PC-9 (cell line): ENCODE measurements at regions of chr2 and their contacts with region 1.

Region 1: DNA sequence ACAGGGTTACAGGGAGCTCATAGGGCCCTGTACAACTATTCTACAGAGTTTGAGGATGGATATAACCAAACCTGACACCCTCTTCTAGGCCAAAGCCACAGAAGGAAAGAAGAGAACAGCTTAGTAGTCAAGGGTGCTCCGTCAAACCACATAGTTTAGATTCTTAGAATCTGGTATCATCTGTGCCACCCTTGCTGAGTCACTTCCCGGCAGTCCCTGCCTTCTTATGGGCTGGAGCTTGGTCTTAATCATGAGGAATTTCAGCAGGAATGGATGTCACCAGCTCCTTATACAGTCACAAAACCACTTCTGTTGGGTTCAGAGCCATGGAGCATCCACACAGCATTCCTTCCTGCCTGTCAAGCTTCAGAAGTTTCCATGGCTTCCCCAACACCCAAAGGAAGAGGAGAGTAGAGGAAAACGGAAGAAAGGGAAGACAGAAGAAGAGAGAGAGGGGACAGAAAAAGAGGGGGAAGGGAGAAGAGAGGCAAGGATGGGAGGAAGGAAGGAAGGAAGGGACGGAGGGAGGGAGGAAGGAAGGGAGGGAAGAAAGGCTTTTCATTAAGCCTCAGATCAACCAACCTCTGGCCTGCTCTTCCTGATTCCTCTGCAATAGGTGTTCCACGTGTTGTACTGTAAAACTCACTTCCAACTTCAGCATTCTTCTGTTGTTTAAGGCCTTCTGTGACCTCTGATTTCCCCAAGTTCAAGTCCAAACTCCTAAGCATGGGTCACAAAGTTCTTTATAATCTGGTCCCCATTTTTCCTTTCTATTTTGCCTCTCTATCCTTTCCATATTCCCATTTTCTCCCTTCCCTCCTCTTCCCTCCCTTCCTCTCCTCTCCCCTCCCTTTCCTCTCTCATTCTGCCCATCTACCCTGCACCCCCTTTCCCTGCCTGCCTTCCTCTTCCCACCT is 246.1 kb upstream of the TNP1 start:
- DNase-seq: peak; percentile 79 to 95
- H3K4me3 ChIP-seq: no peak overlapping the region
- H3K27ac ChIP-seq: peak overlapping the region; percentile 94
- H3K4me1 ChIP-seq: peaks cover 61% of the 10 kb centered on the region
- H3K27me3 ChIP-seq: no peaks in the 10 kb centered on the region
- CTCF ChIP-seq: no peak

Region 2: DNA sequence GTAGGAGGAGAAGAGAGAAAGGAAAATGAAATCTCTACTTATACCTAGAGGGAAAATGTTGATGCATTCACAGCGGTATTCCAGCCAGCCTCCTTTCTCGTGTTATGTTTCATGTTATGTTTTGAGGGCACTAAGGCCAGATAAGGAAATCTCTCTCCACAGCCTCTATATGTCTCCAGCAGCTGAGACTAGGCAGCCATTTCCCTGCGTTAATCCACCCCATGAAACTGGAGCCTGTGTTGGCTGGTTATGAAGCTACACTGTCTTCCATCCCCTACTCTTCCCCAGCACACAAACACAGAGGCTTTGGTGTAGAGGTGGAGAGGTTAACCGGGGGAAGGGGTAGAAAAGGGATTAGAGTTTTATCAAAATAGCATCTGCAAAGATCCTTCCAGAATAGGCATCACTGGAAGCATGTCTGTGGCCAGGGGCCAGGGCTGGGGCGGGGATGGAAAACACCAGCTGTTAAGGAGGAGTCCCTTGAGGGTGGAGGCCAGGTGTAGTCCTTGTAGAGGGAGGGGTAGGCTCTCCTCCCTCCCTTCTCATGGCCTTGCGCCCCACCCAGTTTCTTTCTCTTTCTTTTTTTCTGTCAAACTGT is 145.2 kb before region 1 on chr2:
- CTCF ChIA-PET with region 1: interaction called, 10 read pairs
- POLR2A ChIA-PET with region 1: no interaction called
- intact Hi-C with region 1: no loop called
- DNase-seq: no peak
- H3K4me3 ChIP-seq: no peak overlapping the region
- H3K27ac ChIP-seq: no peak overlapping the region
- H3K4me1 ChIP-seq: no peaks in the 10 kb centered on the region
- H3K27me3 ChIP-seq: no peaks in the 10 kb centered on the region
- CTCF ChIP-seq: no peak

Region 3: DNA sequence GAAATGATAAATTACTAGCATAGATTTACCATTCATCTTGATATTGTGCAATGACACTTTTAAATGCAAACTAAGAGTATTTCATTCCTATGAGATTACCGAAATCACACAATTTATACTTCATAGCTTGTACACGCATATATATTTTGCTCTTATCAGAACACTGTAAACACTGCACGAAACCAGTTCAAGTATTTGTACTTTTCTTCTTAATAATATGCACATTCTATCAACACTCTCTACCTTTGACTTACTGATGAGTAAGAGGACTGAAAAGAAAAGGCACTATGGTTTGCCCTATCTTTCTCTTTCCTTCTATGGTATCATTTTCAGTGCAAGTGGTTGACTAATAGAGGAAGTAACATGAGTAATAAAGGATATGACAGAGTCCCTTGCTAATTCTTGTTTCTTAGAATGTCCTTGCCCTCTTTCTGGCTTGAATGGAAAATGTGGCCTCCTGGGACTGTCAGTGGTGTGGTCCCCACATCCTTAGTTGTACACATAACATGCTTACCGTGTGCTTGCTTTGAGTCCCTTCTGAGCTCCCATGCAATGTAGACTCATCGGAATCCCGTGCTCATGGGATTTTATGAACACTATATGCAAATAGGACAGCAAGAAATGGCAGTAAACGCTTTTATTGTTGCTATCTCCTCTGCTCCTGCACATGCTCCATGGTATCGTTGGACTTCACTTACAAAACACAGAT is 117.4 kb after region 1 on chr2:
- CTCF ChIA-PET with region 1: no interaction called
- POLR2A ChIA-PET with region 1: no interaction called
- intact Hi-C with region 1: loop called (anchors 2 kb)
- DNase-seq: peak in 1 of 2 experiments; percentile 93
- H3K4me3 ChIP-seq: peak overlapping the region; percentile 17
- H3K27ac ChIP-seq: peak overlapping the region; percentile 95
- H3K4me1 ChIP-seq: peaks cover 29% of the 10 kb centered on the region
- H3K27me3 ChIP-seq: no peaks in the 10 kb centered on the region
- CTCF ChIP-seq: no peak

Region 4: GRCh38 chr2:217331523-217332139 is 225.6 kb after region 1 on chr2:
- CTCF ChIA-PET with region 1: no interaction called
- POLR2A ChIA-PET with region 1: interaction called, 6 read pairs
- intact Hi-C with region 1: loop called (anchors 5 kb)
- DNase-seq: peak; percentile 88 to 99
- H3K4me3 ChIP-seq: no peak overlapping the region
- H3K27ac ChIP-seq: peak overlapping the region; percentile 79
- H3K4me1 ChIP-seq: peaks cover 90% of the 10 kb centered on the region
- H3K27me3 ChIP-seq: no peaks in the 10 kb centered on the region
- CTCF ChIP-seq: no peak

Region 5: GRCh38 chr2:217530392-217531090 is 424.6 kb after region 1 on chr2:
- CTCF ChIA-PET with region 1: no interaction called
- POLR2A ChIA-PET with region 1: interaction called, 17 read pairs
- intact Hi-C with region 1: no loop called
- DNase-seq: no peak
- H3K4me3 ChIP-seq: no peak overlapping the region
- H3K27ac ChIP-seq: no peak overlapping the region
- H3K4me1 ChIP-seq: no peaks in the 10 kb centered on the region
- H3K27me3 ChIP-seq: no peaks in the 10 kb centered on the region
- CTCF ChIP-seq: no peak